ENCODE measurements at regions of chr7 and their contacts with region 1.

Region 1: DNA sequence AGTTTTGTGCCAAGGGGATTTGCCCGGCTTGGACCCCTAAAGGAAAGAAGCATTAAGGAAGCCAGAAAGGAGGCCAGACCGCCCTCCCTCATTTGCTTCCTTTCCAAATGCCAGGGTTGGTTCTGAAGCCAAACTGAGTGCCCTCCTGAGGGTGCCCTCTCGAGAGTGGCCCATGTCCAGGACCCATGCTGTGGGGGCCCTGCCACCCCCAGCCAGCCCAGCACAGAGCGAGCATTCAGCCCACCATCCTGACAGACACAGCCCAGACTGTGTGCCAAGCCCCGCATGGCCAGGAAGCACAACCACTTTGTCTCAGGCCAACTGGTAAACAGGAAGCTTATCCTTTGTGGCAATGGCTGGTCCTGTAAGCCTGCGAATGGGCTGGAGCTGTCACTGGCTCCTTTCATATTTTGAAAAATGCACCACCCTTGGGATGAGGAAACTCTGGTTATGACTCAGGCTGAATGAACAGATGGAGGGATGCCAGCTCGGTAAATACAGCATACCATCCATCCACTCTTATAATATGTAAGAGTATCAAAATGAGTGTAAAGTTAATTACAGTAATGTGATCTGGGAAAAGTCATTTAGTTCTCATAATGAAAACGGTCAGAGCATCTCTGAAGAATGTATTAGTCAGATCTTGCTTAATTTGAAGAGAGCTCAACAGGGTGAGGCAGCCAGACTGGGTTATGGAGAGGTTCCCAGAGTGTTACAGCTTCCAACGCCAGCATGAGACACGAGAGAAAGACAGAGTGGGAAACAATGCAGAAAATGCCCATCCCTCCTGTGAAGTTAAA is 65.0 kb downstream of the STK17A start:
- DNase-seq: peak; percentile 81
- H3K4me3 Mint-ChIP-seq: peak overlapping the region; percentile 81
- H3K27ac Mint-ChIP-seq: peak overlapping the region; percentile 99
- H3K4me1 Mint-ChIP-seq: peaks cover 83% of the 10 kb centered on the region
- H3K27me3 Mint-ChIP-seq: no peaks in the 10 kb centered on the region

Region 2: GRCh38 chr7:43590862-43591550 is 56.9 kb before region 1 on chr7:
- intact Hi-C with region 1: loop called (anchors 1 kb)
- DNase-seq: peak; percentile 73
- H3K4me3 Mint-ChIP-seq: peak overlapping the region; percentile 55
- H3K27ac Mint-ChIP-seq: peak overlapping the region; percentile 80
- H3K4me1 Mint-ChIP-seq: peaks cover 72% of the 10 kb centered on the region
- H3K27me3 Mint-ChIP-seq: no peaks in the 10 kb centered on the region

Region 3: GRCh38 chr7:43621729-43622448 is 26.0 kb before region 1 on chr7:
- intact Hi-C with region 1: loop called (anchors 1 kb)
- DNase-seq: no peak
- H3K4me3 Mint-ChIP-seq: peak overlapping the region; percentile 59
- H3K27ac Mint-ChIP-seq: peak overlapping the region; percentile 61
- H3K4me1 Mint-ChIP-seq: peaks cover 45% of the 10 kb centered on the region
- H3K27me3 Mint-ChIP-seq: no peaks in the 10 kb centered on the region

Region 4: DNA sequence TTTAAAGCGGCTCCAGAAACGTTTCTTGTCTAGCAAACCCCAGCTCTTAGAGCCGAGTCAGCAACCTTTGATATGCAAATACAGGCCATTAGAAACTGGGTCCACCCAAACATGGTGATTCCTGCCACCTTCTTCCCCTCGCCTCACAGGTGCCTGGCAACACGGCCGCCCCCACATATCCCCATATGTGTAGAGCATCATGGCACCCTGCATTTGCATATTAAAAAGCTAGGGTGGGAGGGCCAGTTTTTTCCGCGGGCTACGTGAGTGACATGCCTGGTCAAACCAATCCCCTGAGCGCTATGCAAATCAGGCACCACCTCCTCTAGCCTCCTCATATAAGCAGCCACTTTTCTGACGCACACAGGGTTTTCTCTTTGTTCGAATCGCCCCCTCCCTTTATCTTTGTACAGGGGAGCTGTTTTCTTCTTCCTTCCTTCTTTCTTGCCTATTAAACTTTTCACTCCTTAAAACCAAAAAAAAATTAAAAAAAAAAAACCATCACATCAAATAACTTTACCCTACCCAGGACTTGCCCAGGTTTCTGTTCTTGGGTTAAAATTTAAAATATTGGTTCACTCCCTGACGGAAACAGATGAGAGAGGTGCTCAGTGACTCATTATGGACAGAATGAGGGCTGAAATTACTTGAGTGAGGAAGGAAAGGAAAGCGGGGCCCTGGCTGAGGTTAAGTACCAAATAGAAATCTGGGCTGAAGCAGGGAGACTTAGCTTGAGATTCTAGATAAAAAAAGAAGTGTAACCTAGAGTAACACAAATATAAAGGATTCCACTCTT is 21.6 kb after region 1 on chr7:
- intact Hi-C with region 1: loop called (anchors 1 kb)
- DNase-seq: peak; percentile 77
- H3K4me3 Mint-ChIP-seq: peak overlapping the region; percentile 54
- H3K27ac Mint-ChIP-seq: peak overlapping the region; percentile 85
- H3K4me1 Mint-ChIP-seq: peaks cover 53% of the 10 kb centered on the region
- H3K27me3 Mint-ChIP-seq: no peaks in the 10 kb centered on the region

Region 5: DNA sequence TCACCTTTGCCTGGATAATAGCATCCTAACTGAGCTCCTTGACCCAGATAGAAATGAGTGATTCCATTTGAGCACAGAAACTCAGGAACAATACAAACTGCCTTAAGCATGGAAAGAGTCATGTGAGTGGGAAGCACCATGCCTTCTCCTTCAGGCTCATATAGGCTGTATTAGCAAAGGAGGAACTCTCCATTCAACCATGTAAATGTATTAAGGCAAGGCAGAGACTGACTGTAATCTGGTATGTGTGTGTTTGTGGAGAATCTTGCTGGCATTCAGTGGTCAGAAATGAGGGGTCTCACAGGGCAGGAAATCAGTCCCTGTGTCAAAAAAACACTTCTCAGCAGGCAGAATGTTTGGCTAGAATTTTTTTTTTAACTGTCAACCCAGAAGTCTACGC is 41.2 kb after region 1 on chr7:
- intact Hi-C with region 1: no loop called
- DNase-seq: no peak
- H3K4me3 Mint-ChIP-seq: no peak overlapping the region
- H3K27ac Mint-ChIP-seq: no peak overlapping the region
- H3K4me1 Mint-ChIP-seq: peaks cover 24% of the 10 kb centered on the region
- H3K27me3 Mint-ChIP-seq: no peaks in the 10 kb centered on the region

Region 6: GRCh38 chr7:43700059-43700501 is 52.2 kb after region 1 on chr7:
- intact Hi-C with region 1: loop called (anchors 1 kb)
- DNase-seq: no peak
- H3K4me3 Mint-ChIP-seq: no peak overlapping the region
- H3K27ac Mint-ChIP-seq: no peak overlapping the region
- H3K4me1 Mint-ChIP-seq: peaks cover 48% of the 10 kb centered on the region
- H3K27me3 Mint-ChIP-seq: no peaks in the 10 kb centered on the region

Region 7: DNA sequence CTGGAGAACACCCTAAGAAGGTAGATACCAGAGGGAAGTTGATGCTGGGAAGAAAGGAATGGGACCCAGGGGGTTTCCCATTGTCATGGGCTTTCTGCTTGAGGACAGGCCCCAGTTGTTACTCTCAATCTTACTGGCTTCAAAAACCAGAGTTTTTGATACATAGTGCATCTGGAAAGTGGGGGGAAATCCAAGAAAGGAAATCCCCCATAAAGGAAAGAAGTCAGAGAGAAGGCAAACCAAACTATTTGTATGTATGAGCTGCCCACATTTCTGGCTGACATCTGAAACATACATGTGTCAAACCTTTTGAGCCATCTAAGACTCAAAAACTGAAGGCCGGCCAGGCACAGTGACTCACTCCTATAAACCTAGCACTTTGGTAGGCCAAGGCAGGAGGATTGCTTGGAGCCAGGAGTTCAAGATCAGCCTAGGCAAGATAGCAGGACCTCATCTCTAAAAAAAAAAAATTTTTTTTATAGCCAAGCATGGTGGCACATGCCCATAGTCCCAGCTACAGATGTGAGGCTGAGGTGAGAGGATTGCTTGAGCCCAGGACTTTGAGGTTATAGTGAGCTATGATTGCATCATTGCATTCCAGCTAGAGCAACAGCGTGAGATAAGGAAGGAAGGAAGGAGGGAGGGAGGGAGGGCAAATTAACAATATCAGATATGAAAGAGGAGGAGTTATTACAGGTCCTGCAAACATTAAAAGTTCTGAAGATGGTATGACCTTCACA is 88.1 kb after region 1 on chr7:
- intact Hi-C with region 1: loop called (anchors 1 kb)
- DNase-seq: peak; percentile 63
- H3K4me3 Mint-ChIP-seq: no peak overlapping the region
- H3K27ac Mint-ChIP-seq: peak overlapping the region; percentile 85
- H3K4me1 Mint-ChIP-seq: peaks cover 17% of the 10 kb centered on the region
- H3K27me3 Mint-ChIP-seq: peaks cover 3% of the 10 kb centered on the region